CD14-positive monocyte (primary cell): ENCODE measurements at regions of chr19 and their contacts with region 1.

Region 1: DNA sequence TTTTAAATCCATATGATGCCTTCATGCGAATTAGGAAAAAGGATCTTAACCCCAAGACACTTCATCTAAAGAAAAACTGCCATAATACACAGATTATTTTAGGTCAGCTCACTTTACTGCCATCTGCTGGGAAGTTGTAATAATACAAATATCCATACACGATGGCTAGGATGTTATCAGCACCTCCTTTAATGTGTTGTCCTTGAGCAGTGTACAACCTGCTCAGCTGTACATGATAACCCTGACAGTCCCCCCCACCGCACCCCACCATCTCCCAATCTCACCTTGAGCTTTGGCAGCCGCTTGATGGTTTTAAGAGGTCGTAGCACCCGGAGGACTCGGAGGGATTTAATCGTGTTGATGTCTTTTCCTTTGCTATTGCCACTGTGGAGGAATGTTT is 112.2 kb downstream of the IER2 start:
- DNase-seq: peak; percentile 20 to 57 (median 36)
- H3K4me3 ChIP-seq: no peak overlapping the region
- H3K4me3 Mint-ChIP-seq: no peak overlapping the region
- H3K27ac ChIP-seq: no peak overlapping the region
- H3K27ac Mint-ChIP-seq: no peak overlapping the region
- H3K4me1 ChIP-seq: peaks cover 18 to 22% of the 10 kb centered on the region in 2 donors
- H3K4me1 Mint-ChIP-seq: peaks cover 17% of the 10 kb centered on the region
- H3K27me3 ChIP-seq: peaks cover 0 to 2% of the 10 kb centered on the region in 2 donors
- H3K27me3 Mint-ChIP-seq: peaks cover 3 to 12% (median 4%) of the 10 kb centered on the region in 3 donors
- CTCF ChIP-seq: peak; percentile 67

Region 2: DNA sequence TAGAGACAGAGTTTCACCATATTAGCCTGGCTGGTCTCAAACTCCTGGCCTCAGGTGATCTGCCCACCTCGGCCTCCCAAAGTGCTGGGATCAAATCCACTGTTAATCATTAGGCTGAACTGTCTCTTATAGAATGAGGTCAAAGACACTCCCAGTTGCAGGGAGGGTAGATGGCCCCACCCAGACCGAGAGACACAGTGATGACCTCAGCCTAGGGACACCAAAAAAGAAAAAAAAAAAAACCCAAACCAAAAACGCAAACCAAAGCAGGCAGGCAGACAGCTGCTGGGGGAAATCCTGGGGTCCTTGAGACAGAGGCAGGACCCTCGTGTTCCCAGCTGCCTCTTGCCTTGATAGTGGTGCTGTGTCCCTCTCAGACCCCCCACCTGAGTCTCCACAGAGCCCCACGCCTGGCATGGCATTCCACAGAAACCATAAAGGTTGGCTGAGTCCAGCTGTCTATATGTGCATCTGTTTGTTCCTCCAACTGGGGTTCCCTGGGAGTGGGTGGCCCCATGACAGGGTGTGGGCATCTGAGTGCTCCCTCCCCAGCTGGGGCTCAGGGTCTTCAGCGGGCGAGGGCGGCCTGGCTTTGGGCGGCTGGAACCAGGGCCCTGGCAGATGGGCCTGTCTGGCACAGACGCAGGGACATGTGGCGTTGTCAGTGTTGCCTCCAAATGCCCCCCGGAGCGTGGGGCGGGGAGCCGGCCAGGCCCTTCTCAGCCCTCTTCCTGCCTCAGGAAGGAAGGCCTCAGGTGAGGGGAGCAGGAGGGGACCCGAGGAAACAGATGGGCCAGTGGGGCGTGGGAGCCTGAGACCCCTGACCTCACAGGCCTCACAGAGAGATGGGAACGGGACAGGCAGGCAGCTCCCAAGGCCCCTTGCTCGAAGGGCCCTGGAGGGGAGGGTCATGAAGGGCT is 287.9 kb before region 1 on chr19:
- intact Hi-C with region 1: loop called in 1 of 2 experiments (anchors 10 kb)
- DNase-seq: peak in 1 of 3 donors; percentile 4
- H3K4me3 ChIP-seq: no peak overlapping the region
- H3K4me3 Mint-ChIP-seq: no peak overlapping the region
- H3K27ac ChIP-seq: no peak overlapping the region
- H3K27ac Mint-ChIP-seq: no peak overlapping the region
- H3K4me1 ChIP-seq: no peaks in the 10 kb centered on the region
- H3K4me1 Mint-ChIP-seq: peaks cover 2% of the 10 kb centered on the region
- H3K27me3 ChIP-seq: peaks cover 0 to 2% of the 10 kb centered on the region in 2 donors
- H3K27me3 Mint-ChIP-seq: peaks cover 2 to 10% (median 6%) of the 10 kb centered on the region in 3 donors
- CTCF ChIP-seq: no peak

Region 3: GRCh38 chr19:13195678-13196077 is 66.8 kb before region 1 on chr19:
- intact Hi-C with region 1: loop called in 1 of 2 experiments (anchors 5 kb)
- DNase-seq: no peak
- H3K4me3 ChIP-seq: no peak overlapping the region
- H3K4me3 Mint-ChIP-seq: no peak overlapping the region
- H3K27ac ChIP-seq: no peak overlapping the region
- H3K27ac Mint-ChIP-seq: no peak overlapping the region
- H3K4me1 ChIP-seq: peaks cover 0 to 5% of the 10 kb centered on the region in 2 donors
- H3K4me1 Mint-ChIP-seq: peaks cover 8% of the 10 kb centered on the region
- H3K27me3 ChIP-seq: no peaks in the 10 kb centered on the region
- H3K27me3 Mint-ChIP-seq: peaks cover 0 to 4% (median 0%) of the 10 kb centered on the region in 3 donors
- CTCF ChIP-seq: no peak

Region 4: GRCh38 chr19:13207846-13208671 is 54.4 kb before region 1 on chr19:
- intact Hi-C with region 1: loop called in 1 of 2 experiments (anchors 5 kb)
- DNase-seq: peak; percentile 81 to 88 (median 84)
- H3K4me3 ChIP-seq: peak overlapping the region; percentile 46 to 77 (median 62)
- H3K4me3 Mint-ChIP-seq: peak overlapping the region; percentile 76 to 83
- H3K27ac ChIP-seq: peak overlapping the region; percentile 83 to 90
- H3K27ac Mint-ChIP-seq: peak overlapping the region; percentile 88 to 98 (median 96)
- H3K4me1 ChIP-seq: peaks cover 11 to 30% of the 10 kb centered on the region in 2 donors
- H3K4me1 Mint-ChIP-seq: peaks cover 13% of the 10 kb centered on the region
- H3K27me3 ChIP-seq: no peaks in the 10 kb centered on the region
- H3K27me3 Mint-ChIP-seq: peaks cover 0 to 6% (median 2%) of the 10 kb centered on the region in 3 donors
- CTCF ChIP-seq: no peak

Region 5: DNA sequence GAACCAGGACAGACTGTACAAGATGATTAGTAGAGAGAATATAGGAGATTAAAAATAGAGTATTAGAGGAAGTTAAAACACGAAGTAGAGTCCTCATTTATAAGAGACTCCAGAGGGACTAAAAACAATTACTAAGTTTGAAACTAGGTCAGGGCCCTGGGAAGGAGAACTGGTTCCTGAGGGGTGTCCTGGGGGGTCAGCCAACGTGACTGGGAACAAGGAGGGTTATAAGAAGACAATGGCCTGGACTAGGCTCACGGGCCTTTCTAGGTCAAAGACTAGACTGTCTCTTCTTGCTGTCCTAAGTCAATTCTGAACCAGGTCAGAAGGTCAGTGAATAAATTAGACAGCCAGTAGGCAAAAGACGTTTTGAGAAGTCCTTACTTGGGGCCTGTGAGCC is 53.0 kb after region 1 on chr19:
- intact Hi-C with region 1: no loop called
- DNase-seq: no peak
- H3K4me3 ChIP-seq: no peak overlapping the region
- H3K4me3 Mint-ChIP-seq: no peak overlapping the region
- H3K27ac ChIP-seq: no peak overlapping the region
- H3K27ac Mint-ChIP-seq: no peak overlapping the region
- H3K4me1 ChIP-seq: no peaks in the 10 kb centered on the region
- H3K4me1 Mint-ChIP-seq: no peaks in the 10 kb centered on the region
- H3K27me3 ChIP-seq: peaks cover 0 to 2% of the 10 kb centered on the region in 2 donors
- H3K27me3 Mint-ChIP-seq: peaks cover 10 to 21% (median 13%) of the 10 kb centered on the region in 3 donors
- CTCF ChIP-seq: no peak